ENCODE measurements at regions of chr2 and their contacts with region 1.

Region 1: DNA sequence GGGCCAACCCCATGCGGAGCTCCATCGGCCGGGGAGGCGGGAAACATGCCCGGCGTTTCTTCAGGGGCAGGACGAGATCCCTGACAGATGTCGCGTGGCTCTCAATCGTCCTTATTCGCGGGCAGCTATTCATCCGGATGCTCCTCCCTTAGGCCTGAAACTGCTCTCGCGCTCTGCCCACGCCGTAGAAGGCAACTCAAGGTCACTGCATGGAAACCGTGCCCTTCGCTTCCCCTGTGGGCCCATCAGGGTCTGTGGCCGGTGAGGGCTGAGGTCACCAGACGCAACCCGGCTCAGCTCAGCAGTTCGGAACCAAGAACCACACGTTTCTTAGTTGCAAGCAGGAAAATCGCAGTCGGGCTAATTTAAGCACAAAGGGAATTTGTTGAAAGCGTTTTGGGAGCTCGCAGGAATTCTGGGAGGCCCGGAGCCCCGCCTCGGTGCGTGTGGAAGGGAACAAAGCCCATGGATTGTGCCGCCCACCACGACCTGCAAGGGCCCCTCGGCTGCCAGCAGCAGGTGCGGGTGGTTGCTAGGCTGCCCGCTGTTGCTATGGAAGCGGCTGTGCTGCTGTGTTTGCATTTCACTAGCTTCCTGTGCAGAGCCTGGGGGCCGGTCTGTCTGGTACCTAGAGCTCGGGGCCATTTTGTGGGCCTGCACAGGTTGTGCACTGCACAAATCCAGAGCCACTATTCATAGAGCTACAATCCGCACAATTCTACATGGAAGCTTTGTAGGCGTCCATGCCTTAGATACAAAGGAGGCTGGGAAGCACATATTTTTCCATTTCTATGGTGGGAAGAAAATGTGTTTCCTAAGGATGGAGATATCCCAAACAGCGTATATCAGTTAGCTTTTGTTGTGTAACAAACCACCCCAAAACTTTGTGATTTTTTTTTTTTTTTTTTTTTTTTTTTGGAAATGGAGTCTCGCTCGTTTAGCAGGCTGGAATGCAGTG is 6.0 kb upstream of the ALLC start:
- DNase-seq: peak; percentile 70 to 88
- H3K4me3 ChIP-seq: peak overlapping the region; percentile 13 to 67 (median 60); a peak in 7 of 8 replicates
- H3K27ac ChIP-seq: peak overlapping the region; percentile 85
- H3K4me1 ChIP-seq: peaks cover 0 to 14% (median 11%) of the 10 kb centered on the region in 4 experiments; a peak in 6 of 7 replicates
- H3K27me3 ChIP-seq: peaks cover 0 to 2% (median 0%) of the 10 kb centered on the region in 4 experiments; a peak in 1 of 7 replicates
- CTCF ChIP-seq: no peak
- EP300 ChIP-seq: no peak
- POLR2A ChIP-seq: peak in 1 of 2 experiments; percentile 74; a peak in 1 of 3 replicates
- RAD21 ChIP-seq: no peak

Region 2: GRCh38 chr2:3575534-3576262 is 76.3 kb before region 1 on chr2:
- CTCF ChIA-PET with region 1: interaction called, 4 read pairs
- POLR2A ChIA-PET with region 1: interaction called, 34 read pairs
- DNase-seq: no peak
- H3K4me3 ChIP-seq: peak overlapping the region; percentile 88 to 100 (median 94)
- H3K27ac ChIP-seq: peak overlapping the region; percentile 74
- H3K4me1 ChIP-seq: peaks cover 0 to 4% (median 2%) of the 10 kb centered on the region in 4 experiments; a peak in 2 of 7 replicates
- H3K27me3 ChIP-seq: no peaks in the 10 kb centered on the region
- CTCF ChIP-seq: no peak
- EP300 ChIP-seq: no peak
- POLR2A ChIP-seq: no peak; a peak in 1 of 3 replicates
- RAD21 ChIP-seq: no peak

Region 3: DNA sequence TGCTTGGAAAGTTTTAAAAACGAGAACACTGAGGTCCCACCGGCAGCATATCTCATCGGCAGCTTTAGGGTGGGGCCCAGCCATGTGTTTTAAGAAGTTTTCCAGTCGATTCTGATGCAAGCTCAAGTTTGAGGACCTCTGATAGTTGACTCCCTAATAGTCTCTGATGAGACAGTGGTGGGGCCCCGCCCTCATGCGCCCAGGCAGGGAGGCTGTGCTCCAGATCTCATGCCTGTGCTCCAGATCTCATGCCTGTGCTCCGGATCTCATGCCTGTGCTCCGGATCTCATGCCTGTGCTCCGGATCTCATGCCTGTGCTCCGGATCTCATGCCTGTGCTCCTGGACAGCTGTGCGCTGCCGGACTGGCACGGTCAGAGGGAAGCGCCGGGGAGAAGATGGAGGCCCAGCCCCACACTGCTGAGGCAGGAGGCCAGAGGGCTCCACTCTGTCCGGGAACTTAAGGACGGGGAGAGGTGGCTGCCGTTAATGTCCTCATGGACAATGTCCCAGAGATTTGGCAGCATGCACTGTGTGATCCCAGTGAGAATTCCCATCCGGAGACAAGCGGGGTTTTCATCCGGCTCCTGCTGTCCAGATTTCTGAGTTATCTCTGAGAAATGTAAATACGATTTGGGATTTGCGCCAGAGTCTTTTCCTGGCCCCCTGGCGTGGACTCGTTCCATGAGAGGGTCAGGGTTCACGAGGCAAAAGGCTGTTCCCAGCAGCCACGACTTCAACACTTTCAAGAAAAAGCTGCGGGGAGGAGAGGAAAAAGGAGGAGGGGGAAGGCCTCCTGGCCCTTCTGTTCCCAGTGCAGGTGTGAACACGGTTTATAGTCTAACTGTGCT is 66.5 kb before region 1 on chr2:
- CTCF ChIA-PET with region 1: interaction called, 5 read pairs
- POLR2A ChIA-PET with region 1: interaction called, 34 read pairs
- DNase-seq: no peak
- H3K4me3 ChIP-seq: no peak overlapping the region
- H3K27ac ChIP-seq: no peak overlapping the region
- H3K4me1 ChIP-seq: no peaks in the 10 kb centered on the region
- H3K27me3 ChIP-seq: no peaks in the 10 kb centered on the region
- CTCF ChIP-seq: no peak
- EP300 ChIP-seq: no peak
- POLR2A ChIP-seq: no peak
- RAD21 ChIP-seq: no peak

Region 4: DNA sequence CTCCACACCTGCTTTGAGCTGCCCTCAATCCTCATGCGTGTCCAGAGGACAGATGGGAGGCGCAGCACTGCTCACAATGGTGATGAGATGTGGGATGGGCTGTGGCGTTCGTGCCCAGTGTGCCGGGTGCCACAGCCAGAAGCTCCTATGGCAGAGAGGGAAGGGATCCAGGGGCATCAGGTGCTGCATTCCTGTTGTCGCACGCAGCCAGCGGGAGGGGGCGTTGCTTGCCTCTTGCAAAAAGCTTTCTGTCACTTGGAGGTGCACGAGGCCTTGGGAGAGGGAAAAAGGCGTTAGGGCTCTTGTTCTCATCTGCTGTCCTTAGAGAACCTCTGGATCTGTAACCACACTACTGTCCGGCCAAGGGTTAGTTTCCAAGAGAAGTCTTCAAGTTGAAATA is 23.2 kb before region 1 on chr2:
- CTCF ChIA-PET with region 1: interaction called, 20 read pairs
- POLR2A ChIA-PET with region 1: interaction called, 12 read pairs
- DNase-seq: peak; percentile 21 to 78
- H3K4me3 ChIP-seq: no peak overlapping the region
- H3K27ac ChIP-seq: no peak overlapping the region
- H3K4me1 ChIP-seq: no peaks in the 10 kb centered on the region; a peak in 2 of 7 replicates
- H3K27me3 ChIP-seq: no peaks in the 10 kb centered on the region; a peak in 1 of 7 replicates
- CTCF ChIP-seq: peak in 2 of 3 experiments; percentile 57 to 78; a peak in 3 of 4 replicates
- EP300 ChIP-seq: no peak
- POLR2A ChIP-seq: no peak
- RAD21 ChIP-seq: peak; percentile 64 to 71

Region 5: DNA sequence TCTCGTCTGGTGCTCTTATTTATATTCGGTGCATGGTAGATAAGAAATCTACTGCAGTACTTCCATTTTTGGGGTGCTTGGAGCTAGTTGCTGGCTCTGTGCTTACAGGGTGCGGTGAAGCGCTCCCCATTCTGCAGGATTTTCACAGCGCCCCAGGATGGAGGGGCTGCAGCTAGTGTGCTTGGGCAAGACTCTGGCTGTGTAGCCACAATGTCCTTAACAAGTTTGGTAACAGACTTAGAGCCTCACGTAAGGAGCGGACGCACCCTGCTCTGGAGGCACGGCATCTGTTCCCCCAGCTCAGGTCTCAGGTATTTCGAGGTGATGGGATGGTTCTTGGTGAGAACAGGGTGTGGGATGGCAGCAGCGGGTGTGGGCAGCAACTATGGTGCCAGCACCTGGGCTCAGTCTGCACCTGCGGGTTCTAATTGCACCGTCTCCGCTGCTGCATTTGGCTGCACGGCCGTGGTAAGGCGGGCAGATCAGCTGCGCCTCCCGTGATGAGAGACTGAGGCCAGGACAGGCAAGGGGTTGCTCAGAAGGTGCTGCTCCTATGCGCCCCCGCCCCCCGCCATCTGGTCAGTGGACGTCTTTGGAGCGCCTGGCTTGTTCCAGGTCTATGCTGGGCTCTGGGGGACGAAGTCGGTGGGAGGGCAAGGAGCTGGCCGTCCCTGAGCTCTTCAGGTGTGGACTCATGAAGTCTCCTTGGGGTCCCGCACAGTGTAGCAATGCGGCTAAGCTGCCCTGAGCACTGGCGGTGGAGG is 14.1 kb before region 1 on chr2:
- CTCF ChIA-PET with region 1: interaction called, 12 read pairs
- POLR2A ChIA-PET with region 1: interaction called, 15 read pairs
- DNase-seq: peak in 1 of 2 experiments; percentile 39
- H3K4me3 ChIP-seq: no peak overlapping the region
- H3K27ac ChIP-seq: no peak overlapping the region
- H3K4me1 ChIP-seq: no peaks in the 10 kb centered on the region; a peak in 1 of 7 replicates
- H3K27me3 ChIP-seq: no peaks in the 10 kb centered on the region; a peak in 1 of 7 replicates
- CTCF ChIP-seq: no peak
- EP300 ChIP-seq: no peak
- POLR2A ChIP-seq: no peak
- RAD21 ChIP-seq: no peak

Measured in H1 (cell line).